Thyroid gland (tissue), 4 donors: ENCODE measurements at regions of chr1 and their contacts with region 1.

Region 1: GRCh38 chr1:223712194-223712849 is at the start of gene CAPN2:
- DNase-seq: peak; percentile 84 to 86
- H3K4me3 ChIP-seq: peak within 1 kb of the TSS; percentile 75 to 94 (median 82)
- H3K27ac ChIP-seq: peak within 1 kb of the TSS; percentile 96 to 97 (median 96)
- H3K4me1 ChIP-seq: peaks cover 41 to 59% of the 10 kb centered on the region in 2 donors
- H3K27me3 ChIP-seq: no peaks in the 10 kb centered on the region
- CTCF ChIP-seq: peak; percentile 38 to 92 (median 78)
- POLR2A ChIP-seq: peak in 1 of 2 donors; percentile 92
- total RNA-seq, gene CAPN2: 134 to 155 (median 148) TPM

Region 2: DNA sequence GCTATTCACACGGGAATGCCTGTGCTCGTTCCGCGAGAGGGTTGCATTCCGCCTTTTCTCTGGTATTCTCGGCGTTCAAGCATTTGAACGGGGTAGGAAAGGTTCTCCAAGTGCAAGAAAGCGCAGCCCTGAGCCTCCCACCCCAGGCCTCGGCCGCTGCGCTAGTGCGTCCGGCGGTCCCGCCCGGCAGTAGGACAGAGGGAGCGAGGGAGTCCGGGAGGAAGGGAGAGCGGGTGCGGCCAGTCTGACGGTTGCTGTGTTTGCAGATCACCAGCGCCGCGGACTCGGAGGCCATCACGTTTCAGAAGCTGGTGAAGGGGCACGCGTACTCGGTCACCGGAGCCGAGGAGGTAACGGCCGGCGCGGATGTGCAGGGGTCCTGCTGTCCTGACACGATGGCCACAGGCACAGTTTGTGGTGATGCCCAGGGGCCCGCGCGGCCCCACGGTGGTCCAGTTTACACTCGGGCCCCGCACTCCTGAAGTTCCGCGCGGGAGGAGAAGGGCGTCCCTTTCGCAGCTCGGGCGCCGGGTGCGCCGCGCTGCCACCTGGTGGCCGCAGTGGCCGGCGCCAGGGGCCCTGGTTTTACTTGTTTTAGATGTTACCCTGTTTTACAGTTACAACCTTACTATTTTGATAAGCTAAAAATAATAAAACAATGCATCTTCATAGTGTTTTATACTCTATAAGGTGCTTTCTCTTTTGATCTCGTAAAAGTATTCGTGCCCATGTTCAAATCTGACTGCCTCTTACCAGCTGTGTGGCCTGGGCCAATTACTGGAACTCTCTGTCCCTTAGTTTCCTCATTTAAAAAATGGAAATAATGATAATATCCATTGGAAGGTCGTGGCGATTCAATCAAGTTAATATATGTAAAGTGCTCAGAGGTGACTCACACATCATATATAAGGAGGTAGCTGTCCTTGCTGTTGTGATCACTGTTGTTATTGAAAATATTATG is 36.7 kb after region 1 on chr1:
- intact Hi-C with region 1: loop called (anchors 5 kb)
- DNase-seq: peak; percentile 71 to 73
- H3K4me3 ChIP-seq: peak overlapping the region; percentile 12 to 22 (median 16)
- H3K27ac ChIP-seq: peak overlapping the region in 2 of 3 donors; percentile 68
- H3K4me1 ChIP-seq: peaks cover 10 to 23% of the 10 kb centered on the region in 2 donors
- H3K27me3 ChIP-seq: no peaks in the 10 kb centered on the region
- CTCF ChIP-seq: peak; percentile 72 to 97 (median 86)
- POLR2A ChIP-seq: peak in 1 of 2 donors; percentile 13